CD8-positive, alpha-beta memory T cell (primary cell): ENCODE measurements at regions of chr3 and their contacts with region 1.

Region 1: GRCh38 chr3:52278510-52279069 is at the start of gene WDR82:
- DNase-seq: peak; percentile 95 to 99 (median 96)
- H3K4me3 ChIP-seq: peak within 1 kb of the TSS; percentile 79
- H3K4me3 Mint-ChIP-seq: peak within 1 kb of the TSS; percentile 93 to 100 (median 97)
- H3K27ac ChIP-seq: peak within 1 kb of the TSS; percentile 84
- H3K27ac Mint-ChIP-seq: peak within 1 kb of the TSS; percentile 90 to 100 (median 99)
- H3K4me1 ChIP-seq: peaks cover 55% of the 10 kb centered on the region
- H3K4me1 Mint-ChIP-seq: peaks cover 58 to 80% (median 69%) of the 10 kb centered on the region in 3 donors
- H3K27me3 ChIP-seq: no peaks in the 10 kb centered on the region
- H3K27me3 Mint-ChIP-seq: peaks cover 0 to 2% of the 10 kb centered on the region in 2 donors
- total RNA-seq, gene WDR82: 133 to 140 TPM

Region 2: DNA sequence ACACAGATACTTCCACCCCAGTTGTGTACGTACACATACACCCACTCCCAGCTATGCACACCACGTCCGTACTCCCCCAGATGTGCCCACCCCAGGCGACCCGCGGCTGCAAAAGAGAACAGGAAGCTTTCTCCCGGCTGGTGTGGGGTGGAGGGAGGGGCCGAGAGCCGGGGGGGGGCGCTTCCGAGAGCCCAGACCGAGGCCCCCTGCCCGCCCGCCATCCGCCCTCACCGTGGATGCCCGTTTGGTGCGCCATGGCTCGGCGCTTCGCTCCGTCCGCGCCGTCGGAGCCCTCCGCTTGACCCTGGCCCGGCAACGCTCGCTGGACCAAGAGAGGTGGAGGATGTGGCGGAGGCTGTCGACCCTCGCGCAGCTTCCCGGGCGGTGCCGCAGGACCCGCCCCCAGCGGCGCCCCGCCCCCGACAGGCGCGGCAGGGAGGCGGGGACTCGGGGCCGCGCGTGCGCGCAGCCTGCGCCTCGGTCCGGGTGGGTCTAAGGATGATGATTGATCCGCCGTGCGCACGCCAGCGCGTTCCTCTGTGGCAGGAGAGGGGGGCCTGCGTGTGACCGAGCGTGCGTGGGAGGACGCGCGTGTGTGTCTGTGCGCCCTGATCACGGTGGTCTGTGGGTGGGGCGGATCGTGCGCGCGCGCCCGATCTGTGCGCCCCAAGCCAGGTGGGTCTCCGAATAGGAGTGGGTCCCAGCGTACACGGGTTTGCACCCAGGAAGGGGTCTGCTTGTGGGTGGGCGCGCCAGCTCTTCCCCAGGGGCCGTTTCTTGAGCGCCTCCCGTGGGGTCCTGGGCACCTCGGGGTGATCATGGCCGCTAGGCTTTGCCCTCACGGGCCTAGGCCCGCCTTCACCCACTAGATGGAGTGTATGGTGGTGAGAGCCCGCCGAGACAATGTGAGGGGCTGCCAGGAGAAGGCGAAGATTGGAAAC is 39.6 kb before region 1 on chr3 and contains the start of gene TWF2:
- CTCF ChIA-PET with region 1: interaction called, 156 read pairs
- POLR2A ChIA-PET with region 1: interaction called, 54 read pairs
- DNase-seq: peak; percentile 82 to 94 (median 88)
- H3K4me3 ChIP-seq: peak within 1 kb of the TSS; percentile 96
- H3K4me3 Mint-ChIP-seq: peak within 1 kb of the TSS; percentile 96 to 99 (median 98)
- H3K27ac ChIP-seq: peak within 1 kb of the TSS; percentile 83
- H3K27ac Mint-ChIP-seq: peak within 1 kb of the TSS; percentile 88 to 99 (median 96)
- H3K4me1 ChIP-seq: peaks cover 76% of the 10 kb centered on the region
- H3K4me1 Mint-ChIP-seq: peaks cover 72 to 88% (median 83%) of the 10 kb centered on the region in 3 donors
- H3K27me3 ChIP-seq: no peaks in the 10 kb centered on the region
- H3K27me3 Mint-ChIP-seq: peaks cover 0 to 2% of the 10 kb centered on the region in 2 donors
- total RNA-seq, gene TWF2: 98.2 to 101 TPM

Region 3: DNA sequence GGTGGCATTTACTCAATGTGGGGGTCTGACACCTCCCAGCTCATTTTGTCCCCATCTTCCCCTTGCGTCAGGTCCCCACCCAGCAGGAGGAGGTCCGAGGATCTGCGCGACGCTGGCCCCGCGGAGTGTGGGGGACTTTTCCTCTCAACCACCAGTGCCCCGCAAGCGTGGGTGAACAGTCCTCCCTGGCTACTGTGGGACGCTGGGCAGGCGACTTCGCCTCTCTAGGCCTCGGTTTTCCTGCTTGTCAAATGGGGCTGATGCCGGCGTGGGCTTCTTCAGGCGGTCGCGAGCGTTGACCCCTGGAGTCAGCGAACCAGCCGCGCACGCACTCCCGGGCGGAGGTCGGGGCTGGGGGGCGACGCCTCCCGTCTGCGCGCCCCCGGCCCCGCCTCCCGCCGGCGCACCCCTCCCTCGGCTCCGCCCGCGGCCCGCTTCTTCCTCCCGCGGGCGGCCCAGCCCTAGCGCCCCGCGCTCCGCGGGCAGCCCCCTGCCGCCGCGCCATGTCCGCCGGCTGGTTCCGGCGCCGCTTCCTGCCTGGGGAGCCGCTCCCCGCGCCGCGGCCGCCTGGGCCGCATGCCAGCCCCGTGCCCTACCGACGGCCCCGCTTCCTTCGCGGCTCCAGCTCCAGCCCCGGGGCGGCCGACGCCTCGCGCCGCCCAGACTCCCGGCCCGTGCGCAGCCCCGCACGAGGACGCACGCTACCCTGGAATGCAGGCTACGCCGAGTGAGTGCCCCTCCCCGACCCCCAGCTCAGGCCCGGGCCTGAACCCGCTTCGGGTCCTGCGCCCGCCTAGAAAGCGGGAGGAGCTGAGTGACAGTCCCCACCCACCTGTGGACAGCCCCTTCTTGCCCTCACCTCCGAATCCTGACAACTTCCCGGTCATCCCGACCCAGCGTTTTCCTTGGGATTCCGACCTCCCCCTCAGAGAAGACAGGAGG is 33.0 kb before region 1 on chr3 and contains the start of gene PPM1M:
- CTCF ChIA-PET with region 1: interaction called, 156 read pairs
- POLR2A ChIA-PET with region 1: interaction called, 86 read pairs
- DNase-seq: peak; percentile 65 to 83 (median 81)
- H3K4me3 ChIP-seq: peak within 1 kb of the TSS; percentile 82
- H3K4me3 Mint-ChIP-seq: peak within 1 kb of the TSS; percentile 84 to 95 (median 91)
- H3K27ac ChIP-seq: peak within 1 kb of the TSS; percentile 82
- H3K27ac Mint-ChIP-seq: peak within 1 kb of the TSS; percentile 88 to 100 (median 96)
- H3K4me1 ChIP-seq: peaks cover 79% of the 10 kb centered on the region
- H3K4me1 Mint-ChIP-seq: peaks cover 76 to 87% (median 84%) of the 10 kb centered on the region in 3 donors
- H3K27me3 ChIP-seq: no peaks in the 10 kb centered on the region
- H3K27me3 Mint-ChIP-seq: no peaks in the 10 kb centered on the region
- total RNA-seq, gene PPM1M: 56.6 to 60.8 TPM

Region 4: DNA sequence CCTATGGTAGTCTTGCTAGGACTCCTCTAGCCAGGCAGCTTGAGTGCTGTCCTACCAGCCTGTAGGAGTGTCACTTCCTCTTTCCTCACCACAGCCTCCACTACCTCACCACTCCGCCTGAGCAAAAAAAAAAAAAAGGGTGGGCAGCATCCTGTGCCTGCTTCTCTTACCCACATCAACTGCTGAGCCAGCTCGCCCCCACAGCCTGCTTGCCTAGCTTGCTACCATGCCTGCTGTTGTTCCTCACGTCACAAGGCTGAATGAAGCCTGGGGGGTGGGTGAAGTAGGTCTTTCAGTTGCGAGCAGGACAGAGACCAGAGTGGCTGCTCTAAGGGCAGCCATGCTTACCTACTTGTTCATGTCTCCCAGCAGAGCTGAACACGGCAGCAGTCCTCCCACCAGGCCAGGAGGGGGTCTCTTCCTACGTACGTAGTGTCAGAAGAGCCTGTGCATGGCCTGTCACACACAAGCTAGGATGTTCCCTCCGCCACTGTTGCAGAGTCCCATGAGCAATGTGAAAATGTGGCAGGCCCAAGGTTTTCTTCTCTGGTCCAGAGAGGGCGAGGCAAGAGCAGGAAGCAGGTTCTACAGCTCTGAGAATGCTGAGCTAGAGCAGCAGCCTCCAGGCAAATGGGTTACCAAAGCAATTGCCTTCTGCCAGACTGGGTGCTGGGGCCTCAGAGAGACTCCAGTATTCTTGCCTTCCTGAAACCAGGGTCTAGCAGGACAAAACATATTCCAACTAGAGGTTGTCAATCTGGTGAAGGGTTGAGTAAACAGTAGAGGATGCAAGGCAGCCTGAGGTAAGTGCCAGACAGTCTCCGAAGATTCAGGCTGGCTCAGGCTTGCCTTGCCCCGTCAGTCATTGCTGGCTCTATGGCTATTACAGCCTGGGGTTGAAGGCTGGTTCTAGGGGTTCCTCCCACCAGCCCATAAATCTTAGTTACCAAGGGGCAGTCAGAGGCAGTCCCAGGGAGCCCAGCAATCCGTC is 25.0 kb before region 1 on chr3:
- CTCF ChIA-PET with region 1: interaction called, 156 read pairs
- POLR2A ChIA-PET with region 1: interaction called, 86 read pairs
- DNase-seq: peak; percentile 70 to 95 (median 94)
- H3K4me3 ChIP-seq: peak overlapping the region; percentile 57
- H3K4me3 Mint-ChIP-seq: peak overlapping the region; percentile 76 to 92 (median 89)
- H3K27ac ChIP-seq: peak overlapping the region; percentile 77
- H3K27ac Mint-ChIP-seq: peak overlapping the region; percentile 95 to 100 (median 100)
- H3K4me1 ChIP-seq: peaks cover 93% of the 10 kb centered on the region
- H3K4me1 Mint-ChIP-seq: peaks cover 77 to 96% (median 93%) of the 10 kb centered on the region in 3 donors
- H3K27me3 ChIP-seq: no peaks in the 10 kb centered on the region
- H3K27me3 Mint-ChIP-seq: peaks cover 0 to 2% of the 10 kb centered on the region in 2 donors

Region 5: GRCh38 chr3:52291508-52292181 is 13.1 kb after region 1 on chr3:
- CTCF ChIA-PET with region 1: interaction called, 33 read pairs
- POLR2A ChIA-PET with region 1: interaction called, 60 read pairs
- DNase-seq: peak in 4 of 5 donors; percentile 17 to 72 (median 48)
- H3K4me3 ChIP-seq: no peak overlapping the region
- H3K4me3 Mint-ChIP-seq: peak overlapping the region in 4 of 7 donors; percentile 30 to 78 (median 60)
- H3K27ac ChIP-seq: no peak overlapping the region
- H3K27ac Mint-ChIP-seq: peak overlapping the region in 4 of 8 donors; percentile 27 to 89 (median 46)
- H3K4me1 ChIP-seq: peaks cover 28% of the 10 kb centered on the region
- H3K4me1 Mint-ChIP-seq: peaks cover 31 to 46% (median 35%) of the 10 kb centered on the region in 3 donors
- H3K27me3 ChIP-seq: no peaks in the 10 kb centered on the region
- H3K27me3 Mint-ChIP-seq: peaks cover 0 to 3% of the 10 kb centered on the region in 2 donors